ENCODE measurements at regions of chr3 and their contacts with region 1.

Region 1: DNA sequence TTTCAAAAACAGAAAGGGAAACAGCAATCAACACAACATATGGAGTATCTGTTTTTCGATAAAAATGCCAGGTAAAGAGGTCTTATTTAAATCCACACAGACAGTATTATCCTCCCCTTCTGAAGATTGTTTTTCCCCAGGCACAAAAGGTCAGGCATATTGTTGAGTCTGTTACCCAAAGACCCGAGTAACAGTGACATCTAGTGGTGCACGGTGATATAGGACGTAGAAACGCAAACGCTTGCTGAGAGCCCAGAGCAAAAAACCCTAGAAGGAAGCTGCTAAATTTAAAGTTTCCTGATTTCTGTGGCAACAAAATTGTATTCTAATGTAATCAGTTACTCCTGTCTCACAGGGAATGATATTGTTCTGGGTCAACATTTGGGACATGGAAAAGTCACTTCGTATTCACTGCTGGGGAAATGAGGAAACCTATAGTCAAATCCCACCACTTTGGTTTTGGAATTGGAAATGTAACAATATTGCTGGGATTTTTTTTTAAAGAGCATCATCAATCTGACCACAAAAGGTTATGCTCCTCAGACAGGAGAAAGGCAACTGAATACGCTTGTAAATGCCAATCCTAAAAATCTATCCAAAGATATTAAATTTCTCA is 312.7 kb upstream of the CCDC54 start:
- DNase-seq: no peak
- H3K4me3 ChIP-seq: no peak overlapping the region
- CTCF ChIP-seq: peak; percentile 63

Region 2: GRCh38 chr3:106609666-106610301 is 454.8 kb before region 1 on chr3:
- CTCF ChIA-PET with region 1: interaction called, 30 read pairs
- POLR2A ChIA-PET with region 1: no interaction called
- DNase-seq: peak; percentile 86
- H3K4me3 ChIP-seq: no peak overlapping the region
- CTCF ChIP-seq: peak; percentile 64

Region 3: GRCh38 chr3:106824856-106825255 is 239.7 kb before region 1 on chr3:
- CTCF ChIA-PET with region 1: interaction called, 14 read pairs
- POLR2A ChIA-PET with region 1: no interaction called
- DNase-seq: no peak
- H3K4me3 ChIP-seq: no peak overlapping the region
- CTCF ChIP-seq: peak; percentile 50

Region 4: DNA sequence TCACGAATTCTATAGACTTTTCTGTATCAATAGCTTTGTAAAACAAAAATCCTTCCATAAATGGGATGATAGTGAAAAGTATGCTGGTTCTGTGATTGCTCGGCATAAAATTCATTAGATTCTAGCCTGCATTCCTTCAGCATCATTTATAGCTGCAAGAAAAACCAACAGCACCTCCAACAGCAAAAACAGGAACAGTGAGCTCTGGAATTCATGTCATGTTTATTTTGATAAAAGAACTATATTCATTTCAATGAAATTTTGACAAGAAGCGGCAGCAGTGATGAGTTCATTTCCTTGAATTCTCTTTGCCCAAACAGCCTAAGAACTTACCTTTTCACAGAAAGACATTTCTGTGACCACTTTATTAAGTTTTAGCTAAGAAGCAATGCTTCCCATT is 202.5 kb before region 1 on chr3:
- CTCF ChIA-PET with region 1: interaction called, 17 read pairs
- POLR2A ChIA-PET with region 1: interaction called, 3 read pairs
- DNase-seq: peak; percentile 44
- H3K4me3 ChIP-seq: no peak overlapping the region
- CTCF ChIP-seq: peak; percentile 34

Region 5: GRCh38 chr3:107612664-107613084 is 548.1 kb after region 1 on chr3:
- CTCF ChIA-PET with region 1: no interaction called
- POLR2A ChIA-PET with region 1: no interaction called
- DNase-seq: no peak
- H3K4me3 ChIP-seq: no peak overlapping the region
- CTCF ChIP-seq: no peak

Measured in AG04449 (cell line).